ENCODE measurements at regions of chr3 and their contacts with region 1.

Region 1: DNA sequence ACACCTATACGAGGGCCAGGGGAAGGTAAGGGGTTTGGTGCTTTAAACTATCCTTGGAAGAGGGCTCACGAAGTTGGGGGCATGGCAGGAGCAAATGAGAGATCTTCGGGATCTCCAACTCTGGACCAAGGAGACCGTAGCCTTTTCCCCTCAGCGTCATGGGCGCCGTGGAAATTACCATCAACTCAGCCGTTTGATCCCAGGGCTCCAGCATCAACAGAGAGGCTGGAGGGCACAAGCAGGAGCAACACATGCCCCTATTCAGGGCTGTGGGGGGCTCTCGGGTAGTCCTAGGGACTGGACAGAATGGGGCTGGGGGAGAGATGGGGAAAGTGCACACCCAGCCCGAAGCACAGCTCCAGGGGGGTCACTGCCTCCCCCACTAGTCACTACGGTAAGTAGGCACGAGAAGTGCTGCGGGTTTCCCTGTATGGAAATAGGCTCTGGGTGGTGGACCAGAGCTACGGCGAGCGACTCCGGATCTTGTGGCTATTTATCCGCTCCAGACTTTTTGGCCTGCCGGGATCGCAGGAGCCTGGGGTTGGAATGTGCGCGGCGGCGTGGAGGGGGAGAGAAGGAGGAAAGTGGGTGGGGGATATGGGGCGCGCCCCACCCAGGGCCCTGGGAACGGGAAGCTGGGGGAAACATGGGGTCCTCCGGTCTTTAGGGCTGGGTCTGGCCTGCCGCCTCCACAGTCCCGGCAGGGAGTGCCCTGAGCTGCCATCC is 539 bp upstream of the LAMB2 start:
- DNase-seq: peak; percentile 87 to 92 (median 91)
- ATAC-seq: peak; percentile 79 to 91 (median 83)
- H3K4me3 ChIP-seq: peak overlapping the region; percentile 62 to 90 (median 80)
- H3K27ac ChIP-seq: peak overlapping the region; percentile 87 to 99 (median 94)
- H3K4me1 ChIP-seq: peaks cover 8 to 48% (median 30%) of the 10 kb centered on the region in 12 donors
- H3K27me3 ChIP-seq: no peaks in the 10 kb centered on the region
- CTCF ChIP-seq: no peak
- POLR2A ChIP-seq: peak in 1 of 2 donors; percentile 26

Region 2: GRCh38 chr3:49120438-49121131 is 12.8 kb before region 1 on chr3 and contains the start of gene USP19:
- intact Hi-C with region 1: loop called in 1 of 10 experiments (anchors 1 kb)
- DNase-seq: peak; percentile 95 to 98 (median 97)
- ATAC-seq: peak; percentile 81 to 94 (median 90)
- H3K4me3 ChIP-seq: peak within 1 kb of the TSS; percentile 64 to 99 (median 91)
- H3K27ac ChIP-seq: peak within 1 kb of the TSS; percentile 90 to 100 (median 97)
- H3K4me1 ChIP-seq: peaks cover 3 to 32% (median 19%) of the 10 kb centered on the region in 12 donors
- H3K27me3 ChIP-seq: no peaks in the 10 kb centered on the region
- CTCF ChIP-seq: peak in 1 of 12 donors; percentile 12
- POLR2A ChIP-seq: peak; percentile 66 to 80
- total RNA-seq, gene USP19: 47.9 to 90.3 (median 63.1) TPM

Region 3: GRCh38 chr3:49165771-49166751 is 32.7 kb after region 1 on chr3 and contains the start of gene CCDC71:
- intact Hi-C with region 1: loop called in 3 of 10 experiments (anchors 5 kb)
- DNase-seq: peak; percentile 79 to 90 (median 83)
- ATAC-seq: peak; percentile 43 to 80 (median 75)
- H3K4me3 ChIP-seq: peak within 1 kb of the TSS; percentile 78 to 99 (median 89)
- H3K27ac ChIP-seq: peak within 1 kb of the TSS; percentile 82 to 96 (median 91)
- H3K4me1 ChIP-seq: peaks cover 0 to 32% (median 24%) of the 10 kb centered on the region in 12 donors
- H3K27me3 ChIP-seq: no peaks in the 10 kb centered on the region
- CTCF ChIP-seq: no peak
- POLR2A ChIP-seq: peak in 1 of 2 donors; percentile 57
- total RNA-seq, gene CCDC71: 9.7 to 24.0 (median 14.6) TPM

Region 4: DNA sequence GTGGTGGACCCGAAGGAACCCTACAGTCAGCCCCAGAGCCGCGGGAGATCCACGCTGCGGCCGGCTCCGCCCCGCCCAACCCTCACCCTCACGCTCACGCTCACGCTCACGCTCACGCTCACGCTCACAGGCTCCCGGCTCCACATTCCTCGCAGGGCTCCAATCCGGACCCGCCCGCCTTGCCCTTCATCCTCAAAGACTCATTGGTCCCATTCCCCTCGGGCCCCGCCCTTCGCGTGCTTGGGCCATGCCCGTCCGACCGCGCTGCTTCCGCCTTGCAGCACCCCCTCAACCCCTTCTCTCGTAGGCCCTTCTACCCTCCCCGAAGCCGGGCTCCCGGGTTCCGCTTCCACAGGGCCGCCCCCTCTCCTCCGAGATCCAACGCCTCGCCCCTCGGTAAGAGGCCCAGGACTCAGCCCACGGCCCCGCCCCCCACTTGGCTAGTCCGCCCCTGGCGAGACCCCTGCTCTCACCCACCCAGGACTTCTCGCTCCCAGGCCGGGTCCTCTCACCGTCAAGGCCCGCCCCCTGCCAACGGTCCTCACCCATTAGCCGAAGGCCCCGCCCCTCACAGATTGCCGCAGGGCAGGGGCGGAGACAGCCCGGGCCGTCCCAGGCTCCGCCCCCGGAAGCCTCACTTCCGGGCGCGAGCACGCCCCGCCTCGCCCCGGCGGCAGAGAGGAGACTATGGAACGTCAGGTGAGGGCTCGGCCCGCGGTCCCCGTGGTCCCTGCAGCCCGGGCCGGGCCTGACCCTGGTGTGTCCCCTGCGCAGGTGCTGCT is 540.5 kb after region 1 on chr3 and contains the start of gene APEH:
- intact Hi-C with region 1: loop called in 1 of 10 experiments (anchors 10 kb)
- DNase-seq: peak; percentile 95 to 99 (median 97)
- ATAC-seq: peak; percentile 91 to 95 (median 94)
- H3K4me3 ChIP-seq: peak within 1 kb of the TSS; percentile 66 to 100 (median 80)
- H3K27ac ChIP-seq: peak within 1 kb of the TSS; percentile 63 to 99 (median 90)
- H3K4me1 ChIP-seq: peaks cover 0 to 28% (median 14%) of the 10 kb centered on the region in 12 donors
- H3K27me3 ChIP-seq: no peaks in the 10 kb centered on the region
- CTCF ChIP-seq: peak in 2 of 12 donors; percentile 17 to 19
- POLR2A ChIP-seq: peak in 1 of 2 donors; percentile 78
- total RNA-seq, gene APEH: 74.6 to 136 (median 105) TPM

Region 5: GRCh38 chr3:49939858-49940666 is 806.7 kb after region 1 on chr3 and contains the start of gene RBM6:
- intact Hi-C with region 1: no loop called
- DNase-seq: peak; percentile 98 to 99 (median 98)
- ATAC-seq: peak; percentile 99 to 100 (median 99)
- H3K4me3 ChIP-seq: peak within 1 kb of the TSS; percentile 42 to 99 (median 84)
- H3K27ac ChIP-seq: peak within 1 kb of the TSS; percentile 70 to 99 (median 94)
- H3K4me1 ChIP-seq: peaks cover 0 to 32% (median 17%) of the 10 kb centered on the region in 12 donors
- H3K27me3 ChIP-seq: no peaks in the 10 kb centered on the region
- CTCF ChIP-seq: peak in 3 of 12 donors; percentile 8 to 26 (median 21)
- POLR2A ChIP-seq: peak in 1 of 2 donors; percentile 83
- total RNA-seq, gene RBM6: 21.1 to 41.4 (median 32.6) TPM